ENCODE measurements at regions of chr3 and their contacts with region 1.

Region 1: GRCh38 chr3:78645628-78646310 is 1122.0 kb downstream of the ROBO1 start:
- DNase-seq: peak; percentile 81
- ATAC-seq: peak; percentile 84
- H3K4me3 ChIP-seq: no peak overlapping the region
- H3K27ac ChIP-seq: no peak overlapping the region
- H3K4me1 ChIP-seq: peaks cover 2% of the 10 kb centered on the region; the same call in 1 of the 2 replicates
- H3K27me3 ChIP-seq: no peaks in the 10 kb centered on the region
- CTCF ChIP-seq: peak; percentile 88
- POLR2A ChIP-seq: no peak
- RAD21 ChIP-seq: peak; percentile 93

Region 2: GRCh38 chr3:76724075-76724474 is 1921.7 kb before region 1 on chr3:
- CTCF ChIA-PET with region 1: no interaction called
- POLR2A ChIA-PET with region 1: no interaction called
- dilution Hi-C with region 1: no loop called
- in situ Hi-C with region 1: no loop called
- intact Hi-C with region 1: no loop called
- DNase-seq: no peak
- ATAC-seq: no peak
- H3K4me3 ChIP-seq: no peak overlapping the region
- H3K27ac ChIP-seq: no peak overlapping the region
- H3K4me1 ChIP-seq: no peaks in the 10 kb centered on the region
- H3K27me3 ChIP-seq: no peaks in the 10 kb centered on the region
- CTCF ChIP-seq: no peak
- POLR2A ChIP-seq: no peak
- RAD21 ChIP-seq: no peak

Region 3: DNA sequence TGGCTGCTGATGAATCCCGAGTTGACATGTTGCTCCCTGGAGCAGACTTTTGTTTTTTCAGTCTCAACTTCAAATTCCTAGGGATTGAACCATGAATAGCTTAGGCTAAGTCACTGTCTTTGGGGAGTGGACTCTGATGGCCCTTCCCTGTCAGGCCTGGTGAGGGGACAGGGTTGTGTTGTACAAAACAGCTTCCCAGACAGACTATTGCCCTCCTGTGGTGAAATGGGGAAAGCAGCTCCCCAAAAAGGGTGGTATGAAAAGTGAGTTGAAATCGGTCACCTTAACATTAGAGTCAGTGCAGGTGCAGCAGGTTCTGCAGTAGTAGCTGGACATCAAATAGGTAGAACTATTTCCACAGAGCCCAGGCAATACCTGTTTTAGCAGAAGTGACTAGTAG is 830.3 kb before region 1 on chr3:
- CTCF ChIA-PET with region 1: no interaction called
- POLR2A ChIA-PET with region 1: no interaction called
- dilution Hi-C with region 1: no loop called
- in situ Hi-C with region 1: no loop called
- intact Hi-C with region 1: loop called (anchors 10 kb)
- DNase-seq: no peak
- ATAC-seq: no peak
- H3K4me3 ChIP-seq: no peak overlapping the region
- H3K27ac ChIP-seq: no peak overlapping the region
- H3K4me1 ChIP-seq: no peaks in the 10 kb centered on the region
- H3K27me3 ChIP-seq: no peaks in the 10 kb centered on the region
- CTCF ChIP-seq: 0 out of 2 replicates have a peak, but pooled peaks have one; percentile 4
- POLR2A ChIP-seq: no peak
- RAD21 ChIP-seq: no peak

Region 4: DNA sequence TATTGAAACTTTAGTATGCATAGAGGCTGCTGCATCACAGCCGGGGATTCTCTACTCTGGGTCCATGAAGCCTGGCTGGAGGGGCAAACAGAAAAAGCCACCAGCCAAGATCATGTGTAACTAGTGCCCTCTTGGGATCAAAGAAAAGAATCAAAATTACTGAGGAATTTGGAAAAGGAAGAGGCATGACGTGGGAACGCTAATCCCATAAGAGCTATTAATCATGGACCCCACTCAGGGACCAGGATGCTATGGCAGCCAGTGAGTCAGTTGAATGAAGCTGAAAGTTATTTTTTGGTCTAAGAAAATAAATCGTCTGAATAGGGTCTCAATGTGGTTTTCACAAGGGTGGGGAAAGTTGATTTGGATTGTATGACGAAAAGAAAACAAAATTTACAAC is 440.8 kb before region 1 on chr3:
- CTCF ChIA-PET with region 1: interaction called, 5 read pairs
- POLR2A ChIA-PET with region 1: no interaction called
- dilution Hi-C with region 1: no loop called
- in situ Hi-C with region 1: no loop called
- intact Hi-C with region 1: loop called (anchors 10 kb)
- DNase-seq: peak; percentile 67
- ATAC-seq: peak; percentile 80
- H3K4me3 ChIP-seq: peak overlapping the region; percentile 7; the same call in 1 of the 2 replicates
- H3K27ac ChIP-seq: no peak overlapping the region
- H3K4me1 ChIP-seq: no peaks in the 10 kb centered on the region
- H3K27me3 ChIP-seq: no peaks in the 10 kb centered on the region
- CTCF ChIP-seq: peak; percentile 33; the same call in 1 of the 2 replicates
- POLR2A ChIP-seq: no peak
- RAD21 ChIP-seq: peak; percentile 61

Measured in IMR-90 (cell line).